Activated CD8-positive, alpha-beta T cell treated with anti-CD3 and anti-CD28 coated beads, Interleukin-2, amount 10 ng/mL, durations not matched to agents 7 days and 5 days (primary cell): ENCODE measurements at regions of chr2 and their contacts with region 1.

Region 1: DNA sequence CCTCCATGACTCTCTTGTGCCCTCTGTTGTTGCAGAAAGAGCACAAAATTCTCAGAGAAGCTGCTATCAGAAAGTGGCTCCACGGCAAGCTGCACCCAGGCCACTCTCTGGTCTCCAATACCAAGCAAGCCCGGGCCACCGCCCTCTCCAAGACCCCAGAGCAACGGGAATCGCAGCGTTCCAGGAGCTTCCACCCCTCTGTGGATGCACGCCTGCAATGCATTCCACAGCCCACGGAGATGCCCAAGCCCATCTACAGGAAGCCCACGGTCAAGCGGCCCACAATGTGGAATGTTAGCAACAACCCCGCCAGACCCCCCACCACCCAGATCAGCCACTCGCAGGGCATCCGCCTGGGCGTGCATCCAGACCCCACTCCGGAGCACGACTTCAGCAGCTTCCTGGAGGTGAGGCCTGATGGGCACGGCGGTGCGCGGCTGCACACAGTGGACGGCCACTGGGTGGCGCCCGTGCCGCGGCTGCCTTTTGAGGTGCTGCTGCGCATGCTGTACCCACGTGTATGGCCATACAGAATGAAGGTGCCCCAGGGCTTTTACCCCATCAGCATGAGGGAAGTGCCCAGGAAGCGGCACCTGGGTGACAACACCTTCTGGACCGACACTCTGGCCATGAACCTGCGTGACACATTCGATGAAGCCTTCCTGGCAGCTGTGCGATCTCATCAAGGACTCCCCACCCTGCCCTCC is 6.3 kb downstream of the ANKRD53 start:
- DNase-seq: peak; percentile 86
- ATAC-seq: peak; percentile 99
- H3K4me3 Mint-ChIP-seq: peak overlapping the region; percentile 30
- H3K27ac Mint-ChIP-seq: peak overlapping the region; percentile 61
- H3K4me1 Mint-ChIP-seq: peaks cover 24% of the 10 kb centered on the region
- H3K27me3 Mint-ChIP-seq: no peaks in the 10 kb centered on the region

Region 2: GRCh38 chr2:70939001-70939838 is 45.5 kb before region 1 on chr2:
- CTCF ChIA-PET with region 1: no interaction called
- POLR2A ChIA-PET with region 1: no interaction called
- DNase-seq: no peak
- ATAC-seq: no peak
- H3K4me3 Mint-ChIP-seq: no peak overlapping the region
- H3K27ac Mint-ChIP-seq: no peak overlapping the region
- H3K4me1 Mint-ChIP-seq: no peaks in the 10 kb centered on the region
- H3K27me3 Mint-ChIP-seq: peaks cover 21% of the 10 kb centered on the region

Region 3: GRCh38 chr2:70964596-70965386 is 19.9 kb before region 1 on chr2:
- CTCF ChIA-PET with region 1: interaction called, 60 read pairs
- POLR2A ChIA-PET with region 1: no interaction called
- DNase-seq: peak; percentile 84
- ATAC-seq: peak; percentile 97
- H3K4me3 Mint-ChIP-seq: peak overlapping the region; percentile 82
- H3K27ac Mint-ChIP-seq: peak overlapping the region; percentile 50
- H3K4me1 Mint-ChIP-seq: peaks cover 5% of the 10 kb centered on the region
- H3K27me3 Mint-ChIP-seq: peaks cover 25% of the 10 kb centered on the region

Region 4: DNA sequence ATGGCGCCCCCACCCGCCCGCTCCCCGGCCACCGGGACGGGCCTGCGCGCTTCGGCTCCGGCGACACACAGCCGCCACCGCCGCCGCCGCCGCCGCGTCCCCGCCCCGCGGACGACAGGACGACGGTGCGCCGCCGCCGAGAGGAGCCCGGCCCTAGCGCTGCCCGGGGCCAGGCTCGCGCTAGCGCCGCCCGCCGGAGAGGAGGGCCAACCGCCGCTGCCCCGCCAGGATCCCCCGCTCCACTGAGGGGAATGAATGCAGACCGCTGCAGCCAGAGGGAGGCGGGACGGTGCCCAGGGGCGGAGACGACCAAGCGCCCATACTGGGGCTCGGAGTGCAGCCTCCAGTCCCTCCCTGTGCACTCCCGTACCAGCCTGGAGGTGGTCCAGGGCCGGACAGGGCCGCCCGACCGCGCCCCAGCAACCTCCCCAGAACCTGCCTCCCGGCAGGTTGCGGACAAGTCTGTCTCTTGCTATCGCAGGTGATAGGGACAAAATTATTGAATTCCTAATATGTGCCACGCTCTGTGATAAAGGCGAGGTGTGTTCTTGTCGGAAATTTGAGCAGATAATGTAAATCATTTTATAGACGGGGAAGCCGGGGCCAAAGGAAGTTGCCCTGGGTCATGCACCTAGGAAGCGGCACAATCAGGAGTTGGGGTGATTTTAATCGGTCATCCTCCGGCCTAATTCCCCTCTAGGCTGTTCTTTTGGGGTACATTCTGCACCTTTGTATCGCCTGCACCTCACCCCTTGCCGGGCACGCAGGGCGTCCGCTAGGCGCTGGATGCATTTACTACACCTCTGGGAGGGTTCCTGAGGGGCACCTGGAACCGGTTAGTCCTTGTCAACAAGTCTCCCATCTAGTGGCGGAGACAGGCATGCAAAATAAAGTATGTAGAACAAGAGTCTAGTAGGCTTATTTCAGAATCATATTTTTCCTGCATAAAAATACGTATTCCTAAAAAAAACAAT is 10.3 kb after region 1 on chr2 and contains the start of gene TEX261:
- CTCF ChIA-PET with region 1: interaction called, 33 read pairs
- POLR2A ChIA-PET with region 1: no interaction called
- DNase-seq: peak; percentile 91
- ATAC-seq: peak; percentile 97
- H3K4me3 Mint-ChIP-seq: peak within 1 kb of the TSS; percentile 90
- H3K27ac Mint-ChIP-seq: peak within 1 kb of the TSS; percentile 93
- H3K4me1 Mint-ChIP-seq: peaks cover 48% of the 10 kb centered on the region
- H3K27me3 Mint-ChIP-seq: no peaks in the 10 kb centered on the region
- total RNA-seq, gene TEX261: 55.9 to 59.4 TPM

Region 5: GRCh38 chr2:71000780-71001591 is 16.3 kb after region 1 on chr2:
- CTCF ChIA-PET with region 1: interaction called, 33 read pairs
- POLR2A ChIA-PET with region 1: interaction called, 3 read pairs
- DNase-seq: peak; percentile 88
- ATAC-seq: peak; percentile 92
- H3K4me3 Mint-ChIP-seq: peak overlapping the region; percentile 69
- H3K27ac Mint-ChIP-seq: peak overlapping the region; percentile 90
- H3K4me1 Mint-ChIP-seq: peaks cover 37% of the 10 kb centered on the region
- H3K27me3 Mint-ChIP-seq: no peaks in the 10 kb centered on the region

Region 6: GRCh38 chr2:71068218-71069035 is 83.7 kb after region 1 on chr2 and contains the start of gene NAGK:
- CTCF ChIA-PET with region 1: interaction called, 12 read pairs
- POLR2A ChIA-PET with region 1: no interaction called
- DNase-seq: peak; percentile 97
- ATAC-seq: peak; percentile 90
- H3K4me3 Mint-ChIP-seq: peak within 1 kb of the TSS; percentile 96
- H3K27ac Mint-ChIP-seq: peak within 1 kb of the TSS; percentile 99
- H3K4me1 Mint-ChIP-seq: peaks cover 56% of the 10 kb centered on the region
- H3K27me3 Mint-ChIP-seq: no peaks in the 10 kb centered on the region
- total RNA-seq, gene NAGK: 68.3 to 75.3 TPM